Naive thymus-derived CD8-positive, alpha-beta T cell (primary cell): ENCODE measurements at regions of chr3 and their contacts with region 1.

Region 1: DNA sequence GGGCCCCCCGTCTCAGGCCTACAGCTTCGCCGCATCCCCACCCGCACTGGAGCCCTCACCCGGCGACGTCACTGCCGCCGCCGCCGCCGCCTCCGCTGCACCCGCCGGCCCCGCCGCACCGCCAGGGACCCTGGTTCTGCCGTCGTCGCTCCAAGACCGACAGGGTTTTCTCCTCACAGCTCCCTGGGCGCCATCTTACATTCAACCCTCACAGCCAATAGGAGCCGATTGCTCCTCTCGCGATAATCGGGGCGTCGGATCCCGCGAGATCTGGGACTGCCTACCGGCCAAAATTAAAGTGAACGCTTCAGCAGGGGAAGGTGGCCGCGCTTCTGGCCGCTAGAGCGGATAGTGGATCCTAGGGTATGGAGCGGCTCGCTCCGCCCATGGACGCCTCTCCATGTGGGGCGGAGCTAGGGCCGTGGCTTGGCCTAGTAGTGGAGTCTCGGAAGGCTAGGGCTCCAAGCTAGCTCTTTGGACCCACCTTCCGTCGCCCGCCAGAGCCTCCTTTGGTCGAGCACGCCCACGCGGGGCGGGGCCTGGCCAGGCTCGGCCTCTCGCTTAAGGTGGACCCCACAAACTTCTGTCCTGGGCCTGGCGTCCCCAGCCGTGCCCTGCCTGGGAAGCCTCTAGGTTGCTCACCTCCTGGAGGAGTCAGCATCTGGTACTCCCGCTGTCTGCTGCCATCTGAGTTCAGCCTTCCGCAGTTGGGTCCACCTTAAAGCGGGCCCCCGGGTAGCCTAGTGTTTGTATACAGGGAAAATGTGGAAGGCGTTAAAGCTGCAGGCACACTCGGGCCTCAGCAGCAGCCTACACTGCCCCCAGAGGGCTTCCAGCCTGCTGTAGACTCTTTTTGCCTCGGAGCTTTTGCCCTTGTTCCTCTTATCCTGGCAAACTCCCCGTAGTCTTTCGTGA is at the start of gene QRICH1:
- DNase-seq: peak; percentile 89 to 100 (median 96)
- ATAC-seq: peak; percentile 81 to 82
- H3K4me3 Mint-ChIP-seq: peak within 1 kb of the TSS; percentile 93 to 99 (median 98)
- H3K27ac Mint-ChIP-seq: peak within 1 kb of the TSS; percentile 94 to 99 (median 98)
- H3K4me1 Mint-ChIP-seq: peaks cover 14 to 44% (median 36%) of the 10 kb centered on the region in 4 donors
- H3K27me3 Mint-ChIP-seq: no peaks in the 10 kb centered on the region
- polyA plus RNA-seq, gene QRICH1: 13.6 to 23.6 (median 21.1) TPM

Region 2: GRCh38 chr3:49007068-49007770 is 86.9 kb before region 1 on chr3 and contains the start of gene WDR6:
- POLR2A ChIA-PET with region 1: interaction called, 43 read pairs
- DNase-seq: peak; percentile 95 to 99 (median 97)
- ATAC-seq: peak; percentile 92 to 93
- H3K4me3 Mint-ChIP-seq: peak within 1 kb of the TSS; percentile 94 to 100 (median 99)
- H3K27ac Mint-ChIP-seq: peak within 1 kb of the TSS; percentile 97 to 100 (median 99)
- H3K4me1 Mint-ChIP-seq: peaks cover 24 to 46% (median 29%) of the 10 kb centered on the region in 4 donors
- H3K27me3 Mint-ChIP-seq: no peaks in the 10 kb centered on the region
- polyA plus RNA-seq, gene WDR6: 96.3 to 126 (median 111) TPM

Region 3: DNA sequence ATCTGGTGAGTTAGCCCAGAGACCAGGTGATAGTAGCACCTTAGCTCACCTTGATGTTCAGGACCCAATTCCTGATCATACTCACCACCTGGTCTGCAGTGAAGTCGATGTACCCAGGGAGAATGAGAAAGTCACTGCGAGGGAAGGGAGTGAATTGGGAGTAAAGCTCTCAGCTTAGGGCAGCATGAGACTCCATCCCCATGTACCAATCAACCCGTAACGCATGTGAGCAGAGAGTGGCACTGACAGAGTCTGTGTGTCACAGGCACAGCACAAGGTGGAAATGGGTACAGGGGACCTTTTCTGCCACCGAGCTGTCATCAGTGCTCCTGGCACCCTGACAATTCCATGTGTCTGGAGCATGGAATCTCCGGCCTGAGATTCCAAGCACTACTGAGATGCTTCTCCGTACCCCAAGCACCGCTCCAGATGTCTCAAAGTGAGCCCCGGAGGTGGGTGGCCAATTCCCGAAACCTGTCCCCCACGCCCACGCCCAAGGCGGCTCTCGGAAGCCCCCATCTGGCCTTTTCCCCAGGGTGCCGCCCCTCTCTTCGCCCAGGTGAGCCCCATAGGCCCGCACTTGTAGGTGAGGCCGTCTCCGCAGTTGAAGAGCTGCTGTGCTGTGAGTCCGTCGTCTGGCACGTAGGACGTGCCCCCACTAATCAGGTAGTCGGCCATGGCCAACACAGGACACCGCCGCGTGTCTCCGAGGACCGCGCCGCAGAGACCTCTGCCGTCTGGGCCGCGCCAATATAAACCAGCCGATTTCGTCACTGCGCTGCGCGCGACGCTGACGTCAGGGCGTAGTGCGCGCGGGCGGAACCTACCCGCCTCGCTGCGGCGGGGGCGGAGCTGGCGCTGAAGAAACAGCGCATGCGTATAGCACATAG is 65.2 kb before region 1 on chr3 and contains the start of gene IMPDH2:
- POLR2A ChIA-PET with region 1: interaction called, 21 read pairs
- DNase-seq: peak; percentile 88 to 95 (median 92)
- ATAC-seq: peak; percentile 92 to 93
- H3K4me3 Mint-ChIP-seq: peak within 1 kb of the TSS; percentile 87 to 96 (median 96)
- H3K27ac Mint-ChIP-seq: peak within 1 kb of the TSS; percentile 93 to 100 (median 99)
- H3K4me1 Mint-ChIP-seq: peaks cover 19 to 45% (median 38%) of the 10 kb centered on the region in 4 donors
- H3K27me3 Mint-ChIP-seq: no peaks in the 10 kb centered on the region
- polyA plus RNA-seq, gene IMPDH2: 97.3 to 121 (median 118) TPM

Region 4: GRCh38 chr3:49120438-49121131 is 26.5 kb after region 1 on chr3 and contains the start of gene USP19:
- POLR2A ChIA-PET with region 1: interaction called, 85 read pairs
- DNase-seq: peak; percentile 87 to 97 (median 94)
- ATAC-seq: peak; percentile 91
- H3K4me3 Mint-ChIP-seq: peak within 1 kb of the TSS; percentile 76 to 92 (median 87)
- H3K27ac Mint-ChIP-seq: peak within 1 kb of the TSS; percentile 88 to 96 (median 94)
- H3K4me1 Mint-ChIP-seq: peaks cover 6 to 35% (median 29%) of the 10 kb centered on the region in 4 donors
- H3K27me3 Mint-ChIP-seq: no peaks in the 10 kb centered on the region
- polyA plus RNA-seq, gene USP19: 19.5 to 42.2 (median 29.2) TPM

Region 5: DNA sequence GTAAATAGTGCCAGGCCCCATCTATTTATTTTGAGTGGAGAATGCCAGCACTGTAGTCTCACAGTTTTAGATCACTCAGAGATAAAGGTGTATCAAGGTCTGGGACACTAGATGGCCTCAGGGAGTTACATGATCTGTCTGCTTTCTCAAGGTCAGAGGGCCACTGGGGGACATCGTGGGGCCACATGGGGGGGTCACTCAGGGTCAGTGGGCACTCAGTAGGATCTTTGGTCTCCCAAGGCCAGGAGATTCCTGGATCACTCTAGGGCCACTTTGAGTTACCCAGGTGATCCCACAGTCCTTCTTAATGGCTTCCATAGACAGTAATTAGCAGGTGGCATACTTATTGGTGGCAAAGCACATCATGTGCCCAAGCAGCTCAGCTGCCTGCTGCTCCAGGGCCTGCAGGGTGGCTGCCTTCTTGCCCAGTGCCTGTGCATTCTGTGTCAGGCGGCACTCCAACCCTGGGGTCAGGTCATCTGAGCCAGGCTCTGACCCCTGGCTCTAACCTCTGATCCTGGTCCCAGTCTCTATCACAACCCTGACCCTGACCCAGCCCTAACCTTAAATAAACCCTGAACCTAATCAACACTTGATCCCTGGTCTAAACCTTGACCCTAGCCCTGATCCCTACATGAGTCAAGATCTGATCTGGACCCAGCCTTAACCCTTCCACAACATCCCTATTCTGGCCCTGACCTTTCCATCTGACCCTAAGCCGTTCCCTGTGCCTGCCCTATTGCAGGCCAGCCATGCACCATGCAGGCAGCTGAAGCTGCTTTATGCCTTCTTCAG is 40.6 kb after region 1 on chr3:
- POLR2A ChIA-PET with region 1: no interaction called
- DNase-seq: no peak
- ATAC-seq: no peak
- H3K4me3 Mint-ChIP-seq: no peak overlapping the region
- H3K27ac Mint-ChIP-seq: peak overlapping the region in 1 of 10 donors; percentile 41
- H3K4me1 Mint-ChIP-seq: peaks cover 2 to 9% (median 8%) of the 10 kb centered on the region in 4 donors
- H3K27me3 Mint-ChIP-seq: peaks cover 3 to 48% (median 23%) of the 10 kb centered on the region in 5 donors

Region 6: GRCh38 chr3:49165771-49166751 is 72.0 kb after region 1 on chr3 and contains the start of gene CCDC71:
- POLR2A ChIA-PET with region 1: interaction called, 16 read pairs
- DNase-seq: peak; percentile 59 to 86 (median 72)
- ATAC-seq: peak; percentile 82 to 86
- H3K4me3 Mint-ChIP-seq: peak within 1 kb of the TSS; percentile 89 to 98 (median 92)
- H3K27ac Mint-ChIP-seq: peak within 1 kb of the TSS; percentile 91 to 98 (median 95)
- H3K4me1 Mint-ChIP-seq: peaks cover 22 to 55% (median 43%) of the 10 kb centered on the region in 4 donors
- H3K27me3 Mint-ChIP-seq: no peaks in the 10 kb centered on the region
- polyA plus RNA-seq, gene CCDC71: 1.6 to 2.0 (median 1.8) TPM

Region 7: GRCh38 chr3:49411968-49412631 is 318.0 kb after region 1 on chr3 and contains the starts of genes RHOA and TCTA:
- POLR2A ChIA-PET with region 1: interaction called, 30 read pairs
- DNase-seq: peak; percentile 96 to 100 (median 99)
- ATAC-seq: peak; percentile 87 to 89
- H3K4me3 Mint-ChIP-seq: peak within 1 kb of the TSS; percentile 80 to 95 (median 93)
- H3K27ac Mint-ChIP-seq: peak within 1 kb of the TSS; percentile 91 to 96 (median 95)
- H3K4me1 Mint-ChIP-seq: peaks cover 35 to 83% (median 69%) of the 10 kb centered on the region in 4 donors
- H3K27me3 Mint-ChIP-seq: no peaks in the 10 kb centered on the region
- polyA plus RNA-seq, gene RHOA: 478 to 683 (median 552) TPM
- polyA plus RNA-seq, gene TCTA: 37.6 to 48.8 (median 45.5) TPM

Region 8: DNA sequence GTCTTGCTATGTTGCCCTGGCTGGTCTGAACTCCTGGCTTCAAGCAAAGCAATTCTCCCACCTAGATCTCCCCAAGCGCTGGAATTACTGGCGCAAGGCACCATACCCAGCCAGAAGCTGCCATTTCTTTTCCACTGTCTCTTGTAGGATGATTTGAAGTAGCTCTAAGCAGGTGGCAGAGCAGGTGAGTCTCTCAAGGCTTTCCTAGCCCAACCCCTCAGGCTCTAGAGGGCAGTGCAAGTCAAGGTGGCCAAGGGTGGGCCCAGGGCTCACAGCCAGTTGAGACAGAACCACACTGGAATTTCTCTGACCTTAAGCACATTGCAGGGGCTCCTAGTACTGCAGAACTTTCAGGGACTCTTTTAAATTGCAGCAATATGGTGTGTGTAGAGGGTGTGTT is 360.3 kb after region 1 on chr3:
- POLR2A ChIA-PET with region 1: no interaction called
- DNase-seq: no peak
- ATAC-seq: no peak
- H3K4me3 Mint-ChIP-seq: no peak overlapping the region
- H3K27ac Mint-ChIP-seq: peak overlapping the region in 3 of 10 donors; percentile 28 to 83 (median 43)
- H3K4me1 Mint-ChIP-seq: no peaks in the 10 kb centered on the region
- H3K27me3 Mint-ChIP-seq: no peaks in the 10 kb centered on the region

Region 9: GRCh38 chr3:49469936-49470713 is 376.0 kb after region 1 on chr3 and contains the start of gene DAG1:
- POLR2A ChIA-PET with region 1: interaction called, 16 read pairs
- DNase-seq: peak; percentile 91 to 97 (median 94)
- ATAC-seq: peak; percentile 85 to 87
- H3K4me3 Mint-ChIP-seq: peak within 1 kb of the TSS; percentile 84 to 94 (median 91)
- H3K27ac Mint-ChIP-seq: peak within 1 kb of the TSS; percentile 90 to 97 (median 95)
- H3K4me1 Mint-ChIP-seq: peaks cover 15 to 34% (median 21%) of the 10 kb centered on the region in 4 donors
- H3K27me3 Mint-ChIP-seq: no peaks in the 10 kb centered on the region
- polyA plus RNA-seq, gene DAG1: 4.6 to 6.4 (median 4.7) TPM